ENCODE measurements at regions of chr7 and their contacts with region 1.

Region 1: GRCh38 chr7:32204361-32205018 is 134.3 kb upstream of the PDE1C start:
- DNase-seq: peak; percentile 76
- ATAC-seq: peak; percentile 97

Region 2: DNA sequence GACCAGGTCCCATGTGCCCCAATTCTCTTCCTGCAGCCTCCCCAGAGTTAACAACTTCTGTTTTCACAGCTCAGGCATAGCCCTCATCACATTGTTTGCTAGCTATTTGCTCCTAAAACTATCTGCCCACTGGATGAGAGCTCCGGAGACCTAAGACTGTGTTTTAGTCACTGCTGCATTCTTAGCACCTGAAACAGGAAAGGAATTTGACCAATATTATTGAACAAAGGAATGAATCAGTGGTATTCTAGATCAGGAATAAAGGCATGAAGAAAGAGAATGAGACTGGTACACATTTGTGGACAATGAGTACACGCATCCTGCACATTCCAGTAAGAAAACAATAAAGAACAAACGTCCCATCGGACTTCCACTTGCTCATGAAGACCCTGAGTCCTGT is 462.6 kb before region 1 on chr7:
- intact Hi-C with region 1: loop called (anchors 2 kb)
- DNase-seq: no peak
- ATAC-seq: no peak